WTC11 (cell line): ENCODE measurements at regions of chr10 and their contacts with region 1.

Region 1: DNA sequence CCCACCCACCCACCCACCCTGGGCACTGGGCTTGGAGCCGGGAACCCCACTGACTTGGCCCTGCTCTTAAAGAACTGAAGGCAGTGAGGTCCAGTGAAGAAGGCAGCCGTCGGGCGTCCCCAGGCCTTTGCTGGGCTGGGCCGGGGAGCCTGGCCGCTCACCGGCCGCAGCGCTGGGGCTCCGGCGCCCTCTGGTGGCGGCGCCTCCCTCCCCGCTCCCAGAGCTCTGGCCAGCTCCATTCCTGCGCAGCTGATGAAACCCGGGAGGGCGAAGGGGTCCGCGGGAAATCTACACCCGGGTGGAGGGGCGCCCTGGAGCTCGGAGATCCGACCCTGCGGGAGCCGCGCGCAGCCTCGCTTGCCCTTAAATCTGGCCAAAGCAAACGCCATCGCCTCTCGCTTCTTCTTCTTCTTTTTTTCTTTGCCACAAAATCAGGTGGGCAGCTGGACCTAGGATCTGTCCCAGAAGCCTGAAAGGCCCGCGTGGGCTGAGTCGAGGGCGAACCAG is 1.7 kb upstream of the CXCL12 start:
- DNase-seq: peak; percentile 78
- ATAC-seq: peak; percentile 46
- H3K4me3 Mint-ChIP-seq: peak overlapping the region; percentile 41; the same call in 1 of the 2 replicates
- H3K27ac Mint-ChIP-seq: no peak overlapping the region
- H3K4me1 Mint-ChIP-seq: peaks cover 28% of the 10 kb centered on the region
- H3K27me3 Mint-ChIP-seq: peaks cover 25% of the 10 kb centered on the region
- CTCF ChIP-seq: peak; percentile 68

Region 2: GRCh38 chr10:44240584-44241205 is 145.9 kb before region 1 on chr10:
- CTCF ChIA-PET with region 1: no interaction called
- POLR2A ChIA-PET with region 1: no interaction called
- DNase-seq: no peak
- ATAC-seq: no peak
- H3K4me3 Mint-ChIP-seq: no peak overlapping the region
- H3K27ac Mint-ChIP-seq: no peak overlapping the region
- H3K4me1 Mint-ChIP-seq: peaks cover 12% of the 10 kb centered on the region
- H3K27me3 Mint-ChIP-seq: peaks cover 68% of the 10 kb centered on the region
- CTCF ChIP-seq: no peak

Region 3: GRCh38 chr10:44343843-44344242 is 42.8 kb before region 1 on chr10:
- CTCF ChIA-PET with region 1: interaction called, 19 read pairs
- POLR2A ChIA-PET with region 1: interaction called, 4 read pairs
- DNase-seq: peak; percentile 41
- ATAC-seq: peak; percentile 70
- H3K4me3 Mint-ChIP-seq: no peak overlapping the region
- H3K27ac Mint-ChIP-seq: no peak overlapping the region
- H3K4me1 Mint-ChIP-seq: peaks cover 42% of the 10 kb centered on the region
- H3K27me3 Mint-ChIP-seq: no peaks in the 10 kb centered on the region; the same call in 1 of the 2 replicates
- CTCF ChIP-seq: no peak

Region 4: GRCh38 chr10:44362866-44363711 is 23.5 kb before region 1 on chr10:
- CTCF ChIA-PET with region 1: interaction called, 15 read pairs
- POLR2A ChIA-PET with region 1: interaction called, 6 read pairs
- DNase-seq: peak; percentile 50
- ATAC-seq: peak; percentile 79
- H3K4me3 Mint-ChIP-seq: no peak overlapping the region
- H3K27ac Mint-ChIP-seq: no peak overlapping the region
- H3K4me1 Mint-ChIP-seq: peaks cover 65% of the 10 kb centered on the region
- H3K27me3 Mint-ChIP-seq: no peaks in the 10 kb centered on the region; the same call in 1 of the 2 replicates
- CTCF ChIP-seq: no peak

Region 5: DNA sequence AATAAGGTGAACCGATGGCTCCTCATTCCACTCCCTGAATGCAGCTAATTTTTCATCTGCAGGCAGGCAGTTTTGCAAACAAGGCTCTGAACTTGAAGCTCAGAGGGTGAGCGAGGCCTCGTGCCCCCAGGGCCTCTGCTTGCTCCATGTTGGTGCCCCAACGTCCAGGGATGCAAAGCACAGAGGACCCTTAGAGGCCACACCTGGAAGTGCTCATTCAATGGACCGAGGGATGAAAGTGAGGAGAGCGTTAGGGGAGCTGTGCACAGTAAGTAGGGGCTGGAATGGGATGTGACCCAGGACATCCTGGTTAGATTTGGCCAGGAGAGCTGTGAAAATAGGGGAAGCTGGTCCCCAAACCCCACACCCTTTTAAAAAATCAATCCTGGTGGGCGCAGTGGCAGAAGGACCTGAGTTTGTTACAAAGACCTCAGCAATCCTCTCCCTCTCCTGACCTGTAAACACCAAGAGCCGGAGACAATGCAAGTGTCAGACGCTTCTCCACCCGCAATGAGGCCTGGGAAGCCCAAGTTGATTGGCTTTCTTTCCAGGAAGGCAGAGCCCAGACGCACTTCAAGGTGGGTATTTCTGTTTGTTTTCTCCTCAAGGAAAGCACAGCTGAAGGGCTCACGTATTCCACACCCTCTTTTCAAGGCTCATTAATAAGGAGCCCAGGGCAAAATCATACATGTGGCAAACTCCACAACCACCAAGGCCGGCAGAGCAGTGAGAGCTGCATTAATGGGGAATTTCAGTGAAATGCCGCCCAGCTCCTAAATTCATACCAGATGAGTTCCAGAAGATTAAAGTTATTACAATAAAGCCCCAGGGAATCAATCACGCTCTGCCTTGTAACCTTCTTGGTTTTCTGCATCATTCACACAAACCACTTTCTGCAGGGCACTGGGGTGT is 12.4 kb after region 1 on chr10:
- CTCF ChIA-PET with region 1: interaction called, 52 read pairs
- POLR2A ChIA-PET with region 1: interaction called, 4 read pairs
- DNase-seq: no peak
- ATAC-seq: peak; percentile 57
- H3K4me3 Mint-ChIP-seq: no peak overlapping the region; the same call in 1 of the 2 replicates
- H3K27ac Mint-ChIP-seq: no peak overlapping the region
- H3K4me1 Mint-ChIP-seq: peaks cover 70% of the 10 kb centered on the region
- H3K27me3 Mint-ChIP-seq: peaks cover 24% of the 10 kb centered on the region
- CTCF ChIP-seq: no peak

Region 6: GRCh38 chr10:44517635-44518034 is 131.0 kb after region 1 on chr10:
- CTCF ChIA-PET with region 1: interaction called, 12 read pairs
- POLR2A ChIA-PET with region 1: no interaction called
- DNase-seq: peak; percentile 68
- ATAC-seq: peak; percentile 99
- H3K4me3 Mint-ChIP-seq: no peak overlapping the region
- H3K27ac Mint-ChIP-seq: no peak overlapping the region
- H3K4me1 Mint-ChIP-seq: no peaks in the 10 kb centered on the region
- H3K27me3 Mint-ChIP-seq: no peaks in the 10 kb centered on the region
- CTCF ChIP-seq: peak; percentile 60

Region 7: GRCh38 chr10:44576702-44577191 is 190.1 kb after region 1 on chr10:
- CTCF ChIA-PET with region 1: no interaction called
- POLR2A ChIA-PET with region 1: no interaction called
- DNase-seq: no peak
- ATAC-seq: no peak
- H3K4me3 Mint-ChIP-seq: no peak overlapping the region
- H3K27ac Mint-ChIP-seq: no peak overlapping the region
- H3K4me1 Mint-ChIP-seq: no peaks in the 10 kb centered on the region
- H3K27me3 Mint-ChIP-seq: no peaks in the 10 kb centered on the region
- CTCF ChIP-seq: no peak

Region 8: DNA sequence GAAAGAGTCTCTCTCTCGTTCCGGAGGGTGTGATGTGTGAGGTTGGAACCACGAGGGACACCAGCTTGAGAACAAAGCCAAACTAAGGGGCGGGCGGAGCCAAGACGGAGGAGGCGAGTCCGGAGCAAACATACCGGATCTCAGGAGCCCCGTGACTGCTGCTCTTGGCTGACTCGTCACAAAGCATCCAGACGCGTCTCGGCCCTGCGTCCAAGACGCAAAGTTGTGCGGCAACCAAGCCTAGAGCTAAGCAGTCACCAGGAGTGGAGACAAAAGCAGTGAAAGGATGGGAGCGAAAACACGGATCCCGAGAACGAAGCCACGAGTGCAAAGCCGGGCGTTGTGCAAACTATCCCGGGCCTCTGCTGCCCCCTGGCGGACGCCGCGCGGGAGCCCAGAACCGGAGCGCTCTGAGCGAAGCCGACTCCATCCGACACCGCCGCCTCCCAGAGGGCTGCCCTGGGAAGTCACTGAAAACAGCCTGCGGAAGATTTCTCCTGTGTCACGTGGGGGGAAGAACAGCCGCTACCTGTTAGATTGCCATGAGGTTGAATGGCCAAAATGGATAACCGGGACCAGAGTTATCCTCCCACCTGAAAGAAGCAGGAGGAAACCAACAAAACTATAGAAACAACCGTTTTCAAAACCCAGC is 478.2 kb after region 1 on chr10:
- CTCF ChIA-PET with region 1: interaction called, 16 read pairs
- POLR2A ChIA-PET with region 1: no interaction called
- DNase-seq: peak; percentile 95
- ATAC-seq: peak; percentile 92
- H3K4me3 Mint-ChIP-seq: peak overlapping the region; percentile 83
- H3K27ac Mint-ChIP-seq: 0 out of 2 replicates have a peak overlapping the region, but pooled peaks have one; percentile 79
- H3K4me1 Mint-ChIP-seq: peaks cover 37% of the 10 kb centered on the region
- H3K27me3 Mint-ChIP-seq: peaks cover 57% of the 10 kb centered on the region
- CTCF ChIP-seq: peak; percentile 96